CD8-positive, alpha-beta memory T cell (primary cell): ENCODE measurements at regions of chr5 and their contacts with region 1.

Region 1: DNA sequence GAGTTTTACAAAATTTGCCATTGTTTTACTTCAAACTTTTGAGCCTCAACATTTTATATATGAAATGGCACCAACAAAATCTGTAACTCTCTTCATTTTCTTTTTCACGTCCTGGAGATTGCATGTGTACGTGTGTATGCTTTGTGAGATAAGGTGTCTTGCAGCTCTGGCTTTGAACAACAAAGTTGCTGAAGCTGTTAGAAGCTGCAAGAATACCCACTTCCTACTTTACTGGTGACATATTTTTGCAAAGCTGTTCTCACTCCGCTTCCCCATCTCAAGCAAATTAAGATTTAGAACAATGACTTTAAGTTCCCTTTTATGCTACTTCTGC is 41.8 kb downstream of the FYB1 start:
- DNase-seq: peak in 3 of 5 donors; percentile 57 to 78 (median 70)
- H3K4me3 ChIP-seq: peak overlapping the region; percentile 61
- H3K4me3 Mint-ChIP-seq: peak overlapping the region; percentile 60 to 84 (median 74)
- H3K27ac ChIP-seq: peak overlapping the region; percentile 68
- H3K27ac Mint-ChIP-seq: peak overlapping the region; percentile 77 to 97 (median 93)
- H3K4me1 ChIP-seq: peaks cover 96% of the 10 kb centered on the region
- H3K4me1 Mint-ChIP-seq: peaks cover 96 to 100% (median 99%) of the 10 kb centered on the region in 3 donors
- H3K27me3 ChIP-seq: no peaks in the 10 kb centered on the region
- H3K27me3 Mint-ChIP-seq: no peaks in the 10 kb centered on the region

Region 2: DNA sequence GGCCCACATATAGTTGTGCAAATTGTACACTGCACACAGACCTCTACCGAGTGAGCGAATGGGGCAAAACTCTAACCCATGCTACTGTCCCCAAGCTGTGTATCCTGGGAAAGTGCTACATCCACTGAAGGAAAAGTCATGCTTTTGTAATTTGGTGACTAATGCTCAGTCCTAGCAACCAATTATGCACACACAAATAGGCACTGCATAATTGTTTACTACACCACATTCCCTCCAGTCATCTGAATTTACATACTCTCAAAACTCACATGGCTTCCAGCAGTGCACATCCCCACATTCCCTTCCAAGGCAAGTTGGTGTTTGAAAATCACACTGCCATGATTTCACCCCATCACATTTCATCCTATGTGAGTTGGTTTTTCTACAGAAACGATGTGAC is 457.7 kb before region 1 on chr5:
- CTCF ChIA-PET with region 1: no interaction called
- POLR2A ChIA-PET with region 1: no interaction called
- DNase-seq: no peak
- H3K4me3 ChIP-seq: no peak overlapping the region
- H3K4me3 Mint-ChIP-seq: no peak overlapping the region
- H3K27ac ChIP-seq: no peak overlapping the region
- H3K27ac Mint-ChIP-seq: no peak overlapping the region
- H3K4me1 ChIP-seq: no peaks in the 10 kb centered on the region
- H3K4me1 Mint-ChIP-seq: no peaks in the 10 kb centered on the region
- H3K27me3 ChIP-seq: no peaks in the 10 kb centered on the region
- H3K27me3 Mint-ChIP-seq: peaks cover 5 to 28% of the 10 kb centered on the region in 2 donors

Region 3: DNA sequence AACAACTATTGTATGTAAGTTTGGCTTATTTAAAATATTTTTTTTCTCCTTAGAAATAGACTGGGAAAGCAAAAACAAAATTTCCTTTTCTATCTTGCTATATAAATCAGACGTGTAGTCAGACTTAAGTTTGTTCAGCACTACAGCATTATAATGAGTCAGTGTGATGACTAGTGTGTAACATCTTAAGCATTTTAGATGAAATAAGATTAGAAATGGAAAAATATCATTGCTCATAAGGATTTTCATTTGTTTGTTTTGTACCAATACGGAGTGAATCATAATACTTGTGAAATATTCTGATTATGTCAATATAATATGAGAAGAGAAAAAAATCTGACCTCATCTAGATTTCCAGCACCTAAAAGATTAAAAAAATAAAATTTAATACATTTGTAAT is 38.7 kb before region 1 on chr5:
- CTCF ChIA-PET with region 1: no interaction called
- POLR2A ChIA-PET with region 1: no interaction called
- DNase-seq: no peak
- H3K4me3 ChIP-seq: no peak overlapping the region
- H3K4me3 Mint-ChIP-seq: no peak overlapping the region
- H3K27ac ChIP-seq: no peak overlapping the region
- H3K27ac Mint-ChIP-seq: no peak overlapping the region
- H3K4me1 ChIP-seq: peaks cover 12% of the 10 kb centered on the region
- H3K4me1 Mint-ChIP-seq: peaks cover 9 to 52% (median 17%) of the 10 kb centered on the region in 3 donors
- H3K27me3 ChIP-seq: no peaks in the 10 kb centered on the region
- H3K27me3 Mint-ChIP-seq: no peaks in the 10 kb centered on the region

Region 4: DNA sequence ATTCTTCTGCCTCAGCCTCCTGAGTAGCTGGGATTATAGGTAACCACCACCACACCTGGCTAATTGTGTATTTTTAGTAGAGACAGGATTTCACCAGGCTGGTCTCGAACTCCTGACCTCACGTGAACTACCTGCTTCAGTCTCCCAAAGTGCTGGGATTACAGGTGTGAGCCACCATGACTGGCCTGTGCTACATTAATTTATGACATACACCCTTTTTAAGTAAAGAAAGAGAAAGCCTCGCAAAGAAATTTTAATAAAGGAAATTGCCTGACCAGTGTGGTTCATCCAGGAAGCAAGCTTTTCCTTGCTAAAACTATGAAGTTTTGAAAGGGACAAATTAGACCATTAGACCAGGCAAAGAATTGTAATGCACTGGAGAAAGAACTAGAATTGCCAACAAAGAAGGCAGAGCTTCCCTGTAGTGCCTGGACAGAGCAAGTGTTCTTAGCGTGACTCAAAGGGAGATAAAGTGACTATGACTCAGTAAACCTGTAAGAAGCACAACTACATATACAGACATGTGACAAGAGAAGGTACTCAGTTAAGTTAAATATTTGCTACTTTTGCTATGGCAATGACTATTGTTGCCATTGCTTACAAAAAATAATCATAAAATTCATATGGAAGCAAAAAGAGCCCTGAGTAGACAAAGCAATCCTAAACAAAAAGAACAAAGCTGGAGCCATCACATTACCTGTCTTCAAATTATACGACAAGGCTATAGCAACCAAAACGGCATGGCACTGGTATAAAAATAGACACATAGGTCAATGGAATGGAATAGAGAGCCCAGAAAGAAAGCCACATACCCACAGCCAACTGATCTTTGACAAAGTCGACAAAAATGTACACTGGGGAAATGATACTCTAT is 12.8 kb before region 1 on chr5:
- CTCF ChIA-PET with region 1: interaction called, 13 read pairs
- POLR2A ChIA-PET with region 1: interaction called, 18 read pairs
- DNase-seq: peak in 1 of 5 donors; percentile 16
- H3K4me3 ChIP-seq: peak overlapping the region; percentile 11
- H3K4me3 Mint-ChIP-seq: peak overlapping the region; percentile 36 to 77 (median 67)
- H3K27ac ChIP-seq: peak overlapping the region; percentile 33
- H3K27ac Mint-ChIP-seq: peak overlapping the region; percentile 40 to 94 (median 90)
- H3K4me1 ChIP-seq: peaks cover 97% of the 10 kb centered on the region
- H3K4me1 Mint-ChIP-seq: peaks cover 89 to 98% (median 97%) of the 10 kb centered on the region in 3 donors
- H3K27me3 ChIP-seq: no peaks in the 10 kb centered on the region
- H3K27me3 Mint-ChIP-seq: no peaks in the 10 kb centered on the region

Region 5: DNA sequence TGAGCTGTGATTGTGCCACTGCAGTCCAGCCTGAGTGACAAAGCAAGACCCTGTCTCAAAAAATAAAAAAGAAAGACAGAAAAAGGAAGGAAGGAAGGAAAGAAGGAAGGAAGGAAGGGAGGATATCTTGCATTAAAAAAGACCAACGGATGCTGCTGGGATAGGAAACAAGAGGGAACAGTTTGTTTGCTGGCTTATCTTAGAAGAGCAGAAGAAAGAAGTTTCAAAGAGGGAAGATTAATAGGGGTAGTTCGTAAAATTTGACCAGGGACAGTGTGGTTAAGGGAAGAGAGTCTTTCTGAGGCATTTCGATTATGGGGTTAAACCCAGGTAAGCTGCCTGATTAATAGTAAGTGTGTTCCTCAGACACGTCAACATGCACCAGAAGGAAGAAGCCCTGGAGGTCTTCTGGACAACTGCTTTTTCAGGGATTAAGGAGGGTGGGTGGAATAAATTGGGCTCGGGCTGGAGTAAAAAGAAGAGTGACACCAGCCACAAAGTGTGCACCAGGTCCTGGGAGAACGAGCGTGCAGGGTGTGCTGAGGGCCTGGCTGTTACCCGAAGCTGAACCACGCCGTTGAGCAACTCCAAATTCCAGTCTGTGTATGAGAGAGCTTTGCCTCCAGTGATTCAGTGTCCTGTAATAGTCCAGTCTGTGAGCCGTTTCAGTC is 17.0 kb after region 1 on chr5:
- CTCF ChIA-PET with region 1: interaction called, 263 read pairs
- POLR2A ChIA-PET with region 1: interaction called, 135 read pairs
- DNase-seq: no peak
- H3K4me3 ChIP-seq: peak overlapping the region; percentile 45
- H3K4me3 Mint-ChIP-seq: peak overlapping the region; percentile 42 to 96 (median 79)
- H3K27ac ChIP-seq: peak overlapping the region; percentile 40
- H3K27ac Mint-ChIP-seq: peak overlapping the region; percentile 67 to 97 (median 90)
- H3K4me1 ChIP-seq: peaks cover 67% of the 10 kb centered on the region
- H3K4me1 Mint-ChIP-seq: peaks cover 75 to 81% (median 78%) of the 10 kb centered on the region in 3 donors
- H3K27me3 ChIP-seq: no peaks in the 10 kb centered on the region
- H3K27me3 Mint-ChIP-seq: no peaks in the 10 kb centered on the region

Region 6: GRCh38 chr5:39209924-39210323 is 32.3 kb after region 1 on chr5:
- CTCF ChIA-PET with region 1: interaction called, 41 read pairs
- POLR2A ChIA-PET with region 1: interaction called, 8 read pairs
- DNase-seq: peak; percentile 67 to 91 (median 83)
- H3K4me3 ChIP-seq: peak overlapping the region; percentile 55
- H3K4me3 Mint-ChIP-seq: peak overlapping the region; percentile 67 to 84 (median 79)
- H3K27ac ChIP-seq: peak overlapping the region; percentile 18
- H3K27ac Mint-ChIP-seq: peak overlapping the region; percentile 94 to 99 (median 96)
- H3K4me1 ChIP-seq: peaks cover 98% of the 10 kb centered on the region
- H3K4me1 Mint-ChIP-seq: peaks cover 96 to 100% (median 100%) of the 10 kb centered on the region in 3 donors
- H3K27me3 ChIP-seq: no peaks in the 10 kb centered on the region
- H3K27me3 Mint-ChIP-seq: no peaks in the 10 kb centered on the region

Region 7: GRCh38 chr5:39274398-39275085 is 96.9 kb after region 1 on chr5:
- CTCF ChIA-PET with region 1: interaction called, 10 read pairs
- POLR2A ChIA-PET with region 1: interaction called, 3 read pairs
- DNase-seq: peak in 2 of 5 donors; percentile 43 to 51
- H3K4me3 ChIP-seq: peak overlapping the region; percentile 49
- H3K4me3 Mint-ChIP-seq: peak overlapping the region; percentile 69 to 87 (median 85)
- H3K27ac ChIP-seq: peak overlapping the region; percentile 40
- H3K27ac Mint-ChIP-seq: peak overlapping the region; percentile 91 to 99 (median 97)
- H3K4me1 ChIP-seq: peaks cover 36% of the 10 kb centered on the region
- H3K4me1 Mint-ChIP-seq: peaks cover 45 to 67% (median 56%) of the 10 kb centered on the region in 3 donors
- H3K27me3 ChIP-seq: no peaks in the 10 kb centered on the region
- H3K27me3 Mint-ChIP-seq: no peaks in the 10 kb centered on the region

Region 8: DNA sequence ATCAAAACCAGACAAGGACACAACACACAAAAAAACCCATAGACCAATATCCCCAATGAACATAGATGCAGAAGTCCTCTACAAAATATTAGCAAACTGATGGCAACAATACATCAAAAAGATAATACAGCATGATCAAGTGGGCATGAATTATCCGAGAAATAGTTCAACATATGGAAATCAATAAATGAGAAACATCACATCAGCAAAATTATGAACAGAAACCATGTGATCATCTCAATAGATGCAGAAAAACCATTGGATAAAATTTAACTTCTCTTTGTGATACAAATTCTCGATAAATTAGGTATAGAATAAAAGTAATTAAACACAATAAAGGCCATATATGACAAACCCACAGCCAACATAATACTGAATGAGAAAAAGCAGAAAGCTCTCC is 117.1 kb after region 1 on chr5:
- CTCF ChIA-PET with region 1: no interaction called
- POLR2A ChIA-PET with region 1: no interaction called
- DNase-seq: no peak
- H3K4me3 ChIP-seq: no peak overlapping the region
- H3K4me3 Mint-ChIP-seq: no peak overlapping the region
- H3K27ac ChIP-seq: no peak overlapping the region
- H3K27ac Mint-ChIP-seq: no peak overlapping the region
- H3K4me1 ChIP-seq: no peaks in the 10 kb centered on the region
- H3K4me1 Mint-ChIP-seq: no peaks in the 10 kb centered on the region
- H3K27me3 ChIP-seq: no peaks in the 10 kb centered on the region
- H3K27me3 Mint-ChIP-seq: peaks cover 0 to 2% of the 10 kb centered on the region in 2 donors